H1 (cell line): ENCODE measurements at regions of chr2 and their contacts with region 1.

Region 1: GRCh38 chr2:84492571-84492970 is 23.7 kb upstream of the DNAH6 start:
- DNase-seq: no peak
- H3K4me3 ChIP-seq: no peak overlapping the region
- H3K27ac ChIP-seq: no peak overlapping the region
- H3K4me1 ChIP-seq: no peaks in the 10 kb centered on the region
- H3K27me3 ChIP-seq: no peaks in the 10 kb centered on the region; a peak in 1 of 7 replicates
- CTCF ChIP-seq: no peak; a peak in 1 of 4 replicates
- EP300 ChIP-seq: no peak
- POLR2A ChIP-seq: no peak
- RAD21 ChIP-seq: peak; percentile 39 to 49

Region 2: DNA sequence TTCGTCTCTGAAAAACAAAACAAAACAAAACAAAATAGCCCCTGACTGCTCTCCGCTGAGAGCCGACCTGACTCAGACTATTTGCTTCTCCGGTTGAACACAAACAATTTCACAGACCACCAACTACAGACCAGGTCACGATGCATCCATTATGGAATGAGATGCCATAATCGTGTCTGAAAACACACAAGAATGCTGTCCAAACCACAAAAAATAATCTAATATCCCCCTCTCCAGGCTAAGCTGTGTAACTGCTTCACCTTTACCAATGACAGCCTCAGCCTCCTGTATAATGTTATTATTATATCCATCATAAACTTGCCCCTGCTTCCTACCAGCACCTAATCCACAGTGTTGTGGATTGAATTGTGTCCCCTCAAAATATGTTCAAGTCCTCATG is 138.5 kb after region 1 on chr2:
- CTCF ChIA-PET with region 1: interaction called, 11 read pairs
- POLR2A ChIA-PET with region 1: no interaction called
- DNase-seq: no peak
- H3K4me3 ChIP-seq: no peak overlapping the region
- H3K27ac ChIP-seq: no peak overlapping the region
- H3K4me1 ChIP-seq: no peaks in the 10 kb centered on the region
- H3K27me3 ChIP-seq: peaks cover 0 to 1% (median 0%) of the 10 kb centered on the region in 4 experiments; a peak in 2 of 7 replicates
- CTCF ChIP-seq: peak in 2 of 3 experiments; percentile 65 to 72; a peak in 3 of 4 replicates
- EP300 ChIP-seq: no peak
- POLR2A ChIP-seq: no peak
- RAD21 ChIP-seq: peak; percentile 91 to 93